ENCODE measurements at regions of chr11 and their contacts with region 1.

Region 1: DNA sequence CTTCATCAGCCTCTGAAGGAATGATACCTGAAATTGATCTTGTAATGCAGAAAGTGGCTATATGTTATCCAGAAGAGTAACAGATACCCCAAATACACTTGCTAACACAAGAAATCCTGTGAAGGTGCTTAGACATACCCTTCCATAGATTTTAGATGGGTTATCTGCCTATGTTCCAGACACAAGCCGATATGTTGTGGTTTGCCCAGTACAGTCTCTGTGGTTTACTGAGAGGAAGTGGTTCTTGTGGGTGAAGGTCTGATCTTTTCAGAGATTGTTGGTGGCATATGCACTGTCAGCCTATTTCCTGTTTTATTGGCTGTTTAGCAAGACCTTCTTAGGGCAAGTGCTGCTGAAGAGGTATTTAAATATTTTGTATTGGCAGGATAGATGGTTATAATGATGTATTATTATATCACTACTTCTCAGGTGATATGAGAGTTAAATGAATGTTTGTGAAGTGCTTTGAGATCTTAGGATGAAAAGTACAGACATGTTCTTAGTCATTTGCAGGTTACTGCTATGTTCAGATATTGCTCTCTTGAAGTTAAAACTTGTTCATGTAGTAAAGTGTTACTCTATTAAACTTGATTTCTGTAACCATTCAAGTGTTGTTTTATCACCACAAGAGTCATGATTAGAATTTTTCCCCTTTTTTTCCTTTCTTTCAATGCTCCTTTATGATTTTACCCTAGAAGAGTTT is 8.2 kb downstream of the ARHGEF12 start:
- DNase-seq: peak; percentile 58
- H3K4me3 Mint-ChIP-seq: peak overlapping the region; percentile 10
- H3K27ac Mint-ChIP-seq: no peak overlapping the region
- H3K4me1 Mint-ChIP-seq: peaks cover 38% of the 10 kb centered on the region
- H3K27me3 Mint-ChIP-seq: peaks cover 56% of the 10 kb centered on the region

Region 2: DNA sequence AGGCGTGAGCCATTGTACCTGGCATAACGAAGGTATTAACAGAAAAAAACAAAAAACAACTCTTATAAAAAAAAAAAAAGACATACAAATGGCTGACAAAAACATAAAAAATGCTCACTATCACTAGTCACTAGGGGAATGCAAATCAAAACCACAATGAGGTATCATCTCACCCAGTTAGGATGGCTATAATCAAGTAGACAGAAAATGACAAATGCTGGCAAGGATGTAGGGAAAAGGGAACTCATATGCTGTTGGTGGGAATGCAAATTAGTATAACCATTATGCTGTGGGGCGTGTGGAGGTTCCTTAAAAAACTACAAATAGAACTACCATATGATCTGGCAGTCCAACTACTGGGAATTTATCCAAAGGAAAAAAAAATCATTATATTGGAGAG is 938.4 kb before region 1 on chr11:
- CTCF ChIA-PET with region 1: no interaction called
- POLR2A ChIA-PET with region 1: no interaction called
- intact Hi-C with region 1: no loop called
- DNase-seq: no peak
- H3K4me3 Mint-ChIP-seq: no peak overlapping the region
- H3K27ac Mint-ChIP-seq: no peak overlapping the region
- H3K4me1 Mint-ChIP-seq: no peaks in the 10 kb centered on the region
- H3K27me3 Mint-ChIP-seq: no peaks in the 10 kb centered on the region

Region 3: DNA sequence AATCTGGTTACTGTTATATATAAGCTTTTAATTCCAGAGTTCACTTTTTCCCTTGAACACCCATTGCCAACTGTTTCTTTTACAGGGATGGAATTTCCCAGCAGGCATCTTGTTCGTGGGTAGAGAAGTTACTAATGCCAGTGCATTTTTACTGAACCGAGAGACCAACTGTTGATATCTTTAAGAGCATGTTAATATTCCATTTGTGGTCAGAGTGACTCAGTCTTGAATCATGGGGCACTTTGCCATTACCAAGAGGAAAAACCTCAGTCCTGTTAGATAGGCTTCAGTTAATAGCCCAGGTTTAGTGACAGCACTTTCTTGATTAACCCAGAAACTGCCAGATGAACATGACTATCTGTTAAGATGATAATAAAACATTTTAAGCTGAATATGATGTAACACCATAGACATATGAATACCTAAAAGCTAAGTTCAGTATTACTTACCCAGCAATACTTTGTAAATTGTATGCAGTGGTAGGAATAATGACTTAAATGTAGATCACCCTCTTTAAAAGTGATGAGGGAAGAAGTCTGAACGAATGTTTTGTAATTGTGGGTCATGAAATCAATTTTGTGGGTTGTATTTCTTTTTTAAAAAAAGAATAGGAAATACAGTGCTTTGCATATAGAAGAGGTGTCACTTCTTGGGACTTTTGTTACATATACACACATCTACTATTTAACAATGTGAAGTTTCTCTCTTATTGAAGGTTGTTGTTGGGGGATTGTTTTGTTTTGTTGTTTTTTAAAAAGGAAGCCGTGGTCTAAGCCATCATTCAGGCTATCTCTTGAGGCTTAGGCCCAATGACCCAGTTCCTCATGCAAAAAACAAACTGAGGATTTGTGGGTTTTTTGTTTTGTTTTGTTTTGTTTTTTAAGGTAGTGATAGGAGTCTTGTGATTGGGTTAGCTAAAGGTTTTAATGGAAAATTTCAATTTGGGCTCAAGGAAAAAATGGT is 87.9 kb after region 1 on chr11:
- CTCF ChIA-PET with region 1: no interaction called
- POLR2A ChIA-PET with region 1: no interaction called
- intact Hi-C with region 1: loop called (anchors 2 kb)
- DNase-seq: peak; percentile 11
- H3K4me3 Mint-ChIP-seq: no peak overlapping the region
- H3K27ac Mint-ChIP-seq: peak overlapping the region; percentile 51
- H3K4me1 Mint-ChIP-seq: peaks cover 17% of the 10 kb centered on the region
- H3K27me3 Mint-ChIP-seq: no peaks in the 10 kb centered on the region

Region 4: GRCh38 chr11:120835601-120836228 is 491.3 kb after region 1 on chr11:
- CTCF ChIA-PET with region 1: no interaction called
- POLR2A ChIA-PET with region 1: no interaction called
- intact Hi-C with region 1: loop called (anchors 5 kb)
- DNase-seq: peak; percentile 78
- H3K4me3 Mint-ChIP-seq: no peak overlapping the region
- H3K27ac Mint-ChIP-seq: peak overlapping the region; percentile 65
- H3K4me1 Mint-ChIP-seq: peaks cover 13% of the 10 kb centered on the region
- H3K27me3 Mint-ChIP-seq: peaks cover 26% of the 10 kb centered on the region